Activated naive CD4-positive, alpha-beta T cell treated with anti-CD3 and anti-CD28 coated beads for 36 hours (primary cell): ENCODE measurements at regions of chr1 and their contacts with region 1.

Region 1: GRCh38 chr1:160291248-160292220 is 6.6 kb upstream of the PEX19 start:
- DNase-seq: peak; percentile 83
- H3K4me3 Mint-ChIP-seq: no peak overlapping the region
- H3K27ac Mint-ChIP-seq: peak overlapping the region; percentile 46
- H3K4me1 Mint-ChIP-seq: peaks cover 4% of the 10 kb centered on the region
- H3K27me3 Mint-ChIP-seq: no peaks in the 10 kb centered on the region

Region 2: GRCh38 chr1:160205242-160206035 is 86.1 kb before region 1 on chr1 and contains the start of gene PEA15:
- CTCF ChIA-PET with region 1: interaction called, 39 read pairs
- intact Hi-C with region 1: no loop called
- DNase-seq: peak; percentile 79
- H3K4me3 Mint-ChIP-seq: peak within 1 kb of the TSS; percentile 85
- H3K27ac Mint-ChIP-seq: peak within 1 kb of the TSS; percentile 87
- H3K4me1 Mint-ChIP-seq: peaks cover 46% of the 10 kb centered on the region
- H3K27me3 Mint-ChIP-seq: no peaks in the 10 kb centered on the region
- total RNA-seq, gene PEA15: 34.3 to 42.0 TPM

Region 3: GRCh38 chr1:160238408-160238807 is 53.1 kb before region 1 on chr1:
- CTCF ChIA-PET with region 1: interaction called, 17 read pairs
- intact Hi-C with region 1: no loop called
- DNase-seq: no peak
- H3K4me3 Mint-ChIP-seq: no peak overlapping the region
- H3K27ac Mint-ChIP-seq: no peak overlapping the region
- H3K4me1 Mint-ChIP-seq: peaks cover 18% of the 10 kb centered on the region
- H3K27me3 Mint-ChIP-seq: no peaks in the 10 kb centered on the region

Region 4: DNA sequence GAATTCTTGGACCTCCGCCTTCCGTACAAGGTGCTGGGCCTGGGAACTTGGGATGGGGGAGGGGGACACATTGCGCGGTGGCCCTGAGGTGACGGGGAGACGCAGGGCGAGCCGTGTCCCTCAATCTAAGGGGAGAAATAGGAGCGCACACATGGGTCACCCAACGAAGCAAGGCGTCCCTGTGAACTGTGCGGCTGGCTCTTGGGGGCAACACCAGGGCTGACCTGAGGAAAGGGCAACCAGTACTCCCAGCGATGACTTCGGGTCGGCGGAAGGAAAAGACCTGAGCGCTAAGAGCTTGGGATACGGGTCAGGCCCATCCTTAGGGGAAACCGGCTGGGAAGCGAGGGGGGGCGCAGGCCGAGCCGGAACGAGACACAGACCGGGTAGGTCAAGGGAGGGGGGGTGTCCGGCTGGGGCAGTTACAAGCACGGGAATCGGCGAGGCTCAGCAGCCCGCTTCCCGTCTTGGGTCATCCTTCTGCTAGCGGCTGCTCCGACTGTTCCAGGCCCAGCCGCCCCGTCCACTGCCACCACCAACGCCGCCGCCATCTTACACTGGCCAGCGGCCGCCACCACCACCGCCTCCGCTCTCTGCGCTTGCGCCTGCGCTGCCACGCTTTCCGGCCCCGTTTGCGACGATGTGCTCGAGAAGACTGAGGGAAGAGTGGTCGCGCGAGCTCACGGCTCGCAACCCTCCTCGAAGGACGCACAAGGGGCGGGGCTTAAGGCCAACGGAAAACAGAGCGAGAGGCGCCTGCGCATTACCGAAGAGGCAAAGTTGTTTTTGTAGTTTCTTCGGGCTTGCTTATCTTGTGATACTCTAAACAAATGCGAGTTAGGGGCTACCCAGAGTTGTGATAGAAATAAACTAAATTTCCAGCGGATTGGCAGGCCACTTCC is 29.4 kb before region 1 on chr1 and contains the start of gene DCAF8:
- CTCF ChIA-PET with region 1: interaction called, 27 read pairs
- intact Hi-C with region 1: no loop called
- DNase-seq: peak; percentile 99
- H3K4me3 Mint-ChIP-seq: peak within 1 kb of the TSS; percentile 98
- H3K27ac Mint-ChIP-seq: peak within 1 kb of the TSS; percentile 100
- H3K4me1 Mint-ChIP-seq: peaks cover 49% of the 10 kb centered on the region
- H3K27me3 Mint-ChIP-seq: no peaks in the 10 kb centered on the region
- total RNA-seq, gene DCAF8: 218 to 226 TPM

Region 5: GRCh38 chr1:160307118-160307854 is 15.8 kb after region 1 on chr1:
- CTCF ChIA-PET with region 1: interaction called, 18 read pairs
- intact Hi-C with region 1: no loop called
- DNase-seq: no peak
- H3K4me3 Mint-ChIP-seq: no peak overlapping the region
- H3K27ac Mint-ChIP-seq: no peak overlapping the region
- H3K4me1 Mint-ChIP-seq: no peaks in the 10 kb centered on the region
- H3K27me3 Mint-ChIP-seq: no peaks in the 10 kb centered on the region